ENCODE measurements at regions of chr11 and their contacts with region 1.

Region 1: GRCh38 chr11:131748151-131749050 is 378.0 kb downstream of the NTM start:
- DNase-seq: peak; percentile 30 to 38
- ATAC-seq: peak in 7 of 8 donors; percentile 52 to 85 (median 72)
- H3K4me3 ChIP-seq: no peak overlapping the region
- H3K27ac ChIP-seq: peak overlapping the region in 1 of 10 donors; percentile 22
- H3K4me1 ChIP-seq: peaks cover 0 to 11% (median 0%) of the 10 kb centered on the region in 9 donors
- H3K27me3 ChIP-seq: peaks cover 0 to 35% (median 9%) of the 10 kb centered on the region in 7 donors
- CTCF ChIP-seq: peak; percentile 48 to 80 (median 77)

Region 2: DNA sequence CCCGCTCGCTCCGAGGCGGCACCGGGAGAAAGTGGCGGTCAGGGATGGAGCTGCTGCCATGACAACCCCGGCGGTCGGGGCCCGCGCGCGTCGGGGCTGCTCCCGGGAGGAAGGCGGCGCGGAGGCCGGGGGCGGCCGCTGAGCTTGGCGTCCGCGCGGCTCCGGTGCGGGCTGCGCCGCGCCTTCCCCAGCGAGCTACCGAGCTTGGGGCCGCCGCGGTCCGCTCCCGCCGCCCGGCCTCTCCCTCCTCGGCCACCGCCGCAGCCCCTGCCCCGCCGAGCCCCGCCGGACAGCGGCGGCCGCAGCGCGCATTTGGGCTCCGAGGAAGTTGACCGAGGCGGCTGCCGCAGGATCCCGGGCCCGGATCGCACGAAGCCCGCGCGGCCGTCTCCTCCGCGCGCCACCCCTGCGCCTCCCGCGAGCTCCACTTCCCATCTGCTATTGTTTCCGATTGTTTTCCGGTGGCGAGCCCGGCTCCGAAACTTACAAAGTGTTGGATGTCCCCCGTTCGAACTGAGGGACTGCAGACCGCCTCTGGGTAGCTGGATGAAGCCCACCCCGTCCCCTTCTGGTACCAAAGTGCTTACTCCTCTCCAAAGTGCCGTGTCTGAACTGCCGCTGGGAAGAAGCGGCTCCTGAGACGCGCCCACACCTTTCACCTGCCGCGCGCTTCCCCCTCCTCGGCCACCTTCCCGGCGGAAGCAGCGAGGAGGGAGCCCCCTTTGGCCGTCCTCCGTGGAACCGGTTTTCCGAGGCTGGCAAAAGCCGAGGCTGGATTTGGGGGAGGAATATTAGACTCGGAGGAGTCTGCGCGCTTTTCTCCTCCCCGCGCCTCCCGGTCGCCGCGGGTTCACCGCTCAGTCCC is 162.4 kb after region 1 on chr11:
- intact Hi-C with region 1: loop called in 1 of 10 experiments (anchors 5 kb)
- DNase-seq: no peak
- ATAC-seq: peak in 4 of 8 donors; percentile 9 to 70 (median 24)
- H3K4me3 ChIP-seq: peak overlapping the region in 9 of 10 donors; percentile 31 to 53 (median 51)
- H3K27ac ChIP-seq: peak overlapping the region in 5 of 10 donors; percentile 1 to 75 (median 39)
- H3K4me1 ChIP-seq: peaks cover 0 to 5% (median 0%) of the 10 kb centered on the region in 9 donors
- H3K27me3 ChIP-seq: peaks cover 0 to 87% (median 64%) of the 10 kb centered on the region in 7 donors
- CTCF ChIP-seq: no peak

Region 3: GRCh38 chr11:132941024-132941646 is 1192.7 kb after region 1 on chr11:
- intact Hi-C with region 1: loop called in 1 of 10 experiments (anchors 10 kb)
- DNase-seq: peak in 1 of 2 donors; percentile 22
- ATAC-seq: peak in 1 of 8 donors; percentile 23
- H3K4me3 ChIP-seq: no peak overlapping the region
- H3K27ac ChIP-seq: no peak overlapping the region
- H3K4me1 ChIP-seq: peaks cover 0 to 7% (median 4%) of the 10 kb centered on the region in 9 donors
- H3K27me3 ChIP-seq: peaks cover 14 to 51% (median 45%) of the 10 kb centered on the region in 7 donors
- CTCF ChIP-seq: peak; percentile 58 to 88 (median 80)